ENCODE measurements at regions of chr19 and their contacts with region 1.

Region 1: DNA sequence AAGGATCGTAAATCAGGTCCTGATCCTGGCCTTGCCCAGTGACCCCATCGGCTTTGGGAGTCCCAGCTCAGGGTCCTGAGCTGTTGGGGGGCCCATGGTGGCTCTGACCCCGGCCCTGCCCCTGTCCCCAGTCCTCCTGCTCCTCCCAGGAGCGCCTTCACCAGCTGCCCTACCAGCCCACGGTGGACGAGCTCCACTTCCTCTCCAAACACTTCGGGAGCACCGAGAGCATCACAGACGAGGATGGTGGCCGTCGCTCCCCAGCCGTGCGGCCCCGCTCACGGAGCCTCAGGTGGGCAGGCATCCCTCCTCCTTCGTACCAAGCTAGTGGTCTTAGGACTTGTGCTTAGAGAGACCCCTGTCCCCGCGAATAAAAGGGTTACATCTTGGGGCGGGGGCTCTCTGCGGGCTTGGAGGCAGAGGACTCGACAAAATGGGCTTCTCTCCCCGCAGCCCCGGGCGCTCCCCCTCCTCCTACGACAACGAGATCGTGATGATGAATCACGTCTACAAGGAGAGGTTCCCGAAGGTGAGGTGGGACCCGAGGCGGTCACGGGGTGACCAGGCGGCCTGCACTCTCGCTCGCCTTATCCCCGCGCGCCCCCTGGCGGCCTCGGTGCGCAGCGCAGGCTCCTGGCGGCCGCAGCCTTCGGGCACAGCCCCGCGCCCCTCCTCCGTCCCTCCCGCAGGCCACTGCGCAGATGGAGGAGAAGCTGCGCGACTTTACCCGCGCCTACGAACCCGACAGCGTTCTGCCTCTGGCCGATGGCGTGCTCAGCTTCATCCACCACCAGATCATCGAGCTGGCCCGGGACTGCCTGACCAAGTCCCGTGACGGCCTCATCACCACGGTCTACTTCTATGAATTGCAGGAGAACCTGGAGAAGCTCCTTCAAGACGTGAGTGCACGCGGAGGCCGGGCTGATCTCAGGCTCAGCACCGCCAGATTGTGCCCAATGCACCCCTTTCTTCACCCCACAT is 9.1 kb downstream of the MAST1 start:
- DNase-seq: peak; percentile 76
- ATAC-seq: peak; percentile 97 to 99
- H3K4me3 ChIP-seq: no peak overlapping the region
- H3K27ac ChIP-seq: peak overlapping the region; percentile 20 to 70; a peak in 2 of 6 replicates
- H3K4me1 ChIP-seq: 0 out of 3 replicates have a peak, but pooled peaks cover 3% of the 10 kb centered on the region
- CTCF ChIP-seq: peak; percentile 80
- EP300 ChIP-seq: no peak
- POLR2A ChIP-seq: no peak
- RAD21 ChIP-seq: peak; percentile 75 to 85

Region 2: GRCh38 chr19:12757544-12758274 is 89.7 kb before region 1 on chr19:
- CTCF ChIA-PET with region 1: interaction called, 79 read pairs
- POLR2A ChIA-PET with region 1: no interaction called
- DNase-seq: peak; percentile 50 to 79
- ATAC-seq: peak; percentile 89 to 94
- H3K4me3 ChIP-seq: peak overlapping the region; percentile 36
- H3K27ac ChIP-seq: peak overlapping the region; percentile 60 to 83
- H3K4me1 ChIP-seq: 0 out of 3 replicates have a peak, but pooled peaks cover 3% of the 10 kb centered on the region
- CTCF ChIP-seq: peak; percentile 79
- EP300 ChIP-seq: no peak
- POLR2A ChIP-seq: no peak
- RAD21 ChIP-seq: peak; percentile 28 to 40; a peak in 4 of 5 replicates

Region 3: DNA sequence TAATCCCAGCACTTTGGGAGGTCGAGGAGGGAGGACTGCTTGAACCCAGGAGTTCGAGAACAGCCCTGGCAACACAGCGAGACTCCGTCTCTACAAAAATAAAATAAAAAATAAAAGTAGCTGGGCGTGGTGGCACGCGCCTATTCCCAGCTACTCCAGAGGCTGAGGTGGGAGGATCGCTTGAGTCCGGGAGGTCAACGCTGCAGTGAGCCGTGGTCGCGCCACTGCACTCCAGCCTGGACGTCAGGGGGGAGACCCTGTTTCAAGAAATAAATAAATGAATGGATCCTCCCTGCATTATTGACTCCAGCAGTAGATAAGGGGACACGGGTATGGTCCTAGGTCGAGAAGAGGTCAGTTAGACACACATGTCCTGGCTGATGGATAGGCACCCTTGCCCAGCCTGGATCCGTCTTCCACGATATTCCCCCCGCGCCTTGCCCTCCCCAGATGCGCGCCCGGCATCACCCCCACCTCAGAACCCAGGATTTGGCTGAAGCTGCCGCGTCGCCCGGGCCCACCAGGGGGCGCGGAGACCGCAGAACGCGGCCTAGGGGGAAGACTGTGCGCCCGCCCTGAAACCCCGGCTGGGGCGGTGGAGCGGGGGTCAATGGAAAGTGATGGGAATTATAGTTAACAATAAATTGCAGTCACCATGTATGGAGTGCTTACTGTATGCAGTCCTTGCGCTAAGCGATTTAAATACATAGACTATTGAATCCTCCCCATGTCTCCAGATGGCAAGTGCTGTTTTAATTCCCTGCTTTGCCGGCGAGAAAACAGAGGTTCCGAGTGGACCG is 70.0 kb before region 1 on chr19:
- CTCF ChIA-PET with region 1: interaction called, 16 read pairs
- POLR2A ChIA-PET with region 1: no interaction called
- DNase-seq: peak in 1 of 2 experiments; percentile 77
- ATAC-seq: peak; percentile 56 to 75
- H3K4me3 ChIP-seq: peak overlapping the region; percentile 55
- H3K27ac ChIP-seq: peak overlapping the region; percentile 91 to 99
- H3K4me1 ChIP-seq: peaks cover 40% of the 10 kb centered on the region
- CTCF ChIP-seq: peak; percentile 77
- EP300 ChIP-seq: no peak
- POLR2A ChIP-seq: no peak
- RAD21 ChIP-seq: peak; percentile 75 to 80

Region 4: GRCh38 chr19:12796146-12797071 is 51.0 kb before region 1 on chr19:
- CTCF ChIA-PET with region 1: interaction called, 44 read pairs
- POLR2A ChIA-PET with region 1: no interaction called
- DNase-seq: peak in 1 of 2 experiments; percentile 86
- ATAC-seq: peak; percentile 27 to 34; a peak in 4 of 6 replicates
- H3K4me3 ChIP-seq: no peak overlapping the region
- H3K27ac ChIP-seq: peak overlapping the region; percentile 69 to 84
- H3K4me1 ChIP-seq: peaks cover 21% of the 10 kb centered on the region
- CTCF ChIP-seq: peak; percentile 90
- EP300 ChIP-seq: no peak
- POLR2A ChIP-seq: no peak
- RAD21 ChIP-seq: peak; percentile 95 to 98

Region 5: DNA sequence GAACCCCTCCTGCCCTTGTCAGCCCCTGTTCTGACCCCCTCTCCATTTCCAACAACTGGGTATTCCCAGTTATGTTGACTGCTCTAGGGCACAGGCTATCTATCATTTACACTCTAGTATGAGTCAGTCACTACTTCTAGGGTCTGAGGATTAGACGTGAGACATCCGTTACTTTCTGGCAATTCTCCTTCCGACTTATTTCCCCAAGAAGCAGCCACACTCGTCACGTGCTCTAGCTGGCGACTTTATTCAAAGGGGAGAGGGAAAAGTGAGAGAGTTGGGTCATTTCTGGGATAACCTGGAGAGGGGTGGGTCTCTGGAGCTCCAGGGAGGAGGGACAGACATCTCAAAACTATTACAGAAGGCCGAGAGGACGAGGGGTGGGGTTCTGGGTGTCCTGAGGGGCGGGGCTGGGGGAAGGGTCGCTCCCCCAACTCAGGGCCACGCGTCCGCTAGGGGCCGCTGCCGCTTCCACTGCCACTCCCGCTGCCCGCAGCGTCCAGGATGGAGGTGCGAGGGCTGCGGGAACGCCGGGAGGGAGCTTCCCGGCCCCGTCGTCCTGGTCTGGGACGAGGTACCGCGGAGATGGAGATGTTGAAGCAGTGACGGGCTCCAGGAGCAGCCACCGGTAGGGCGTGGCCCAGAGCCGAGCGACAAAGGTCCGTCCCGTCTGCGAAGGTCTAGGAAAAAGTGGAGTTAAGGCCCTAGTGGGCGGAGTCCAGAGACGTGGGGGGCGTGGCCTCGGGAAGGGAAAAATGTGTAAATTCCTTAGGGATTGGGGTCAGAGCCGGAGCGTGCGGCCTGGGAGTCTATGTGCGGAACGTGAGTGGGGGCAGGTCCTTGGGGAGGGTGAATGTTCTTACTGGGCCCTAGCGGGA is 22.0 kb before region 1 on chr19:
- CTCF ChIA-PET with region 1: interaction called, 36 read pairs
- POLR2A ChIA-PET with region 1: no interaction called
- DNase-seq: peak in 1 of 2 experiments; percentile 57
- ATAC-seq: peak; percentile 72 to 86
- H3K4me3 ChIP-seq: peak overlapping the region; percentile 27; the same call in 2 of the 3 replicates
- H3K27ac ChIP-seq: no peak overlapping the region
- H3K4me1 ChIP-seq: no peaks in the 10 kb centered on the region
- CTCF ChIP-seq: peak; percentile 38
- EP300 ChIP-seq: no peak
- POLR2A ChIP-seq: no peak
- RAD21 ChIP-seq: no peak

Region 6: GRCh38 chr19:12864721-12865715 is 17.6 kb after region 1 on chr19:
- CTCF ChIA-PET with region 1: interaction called, 23 read pairs
- POLR2A ChIA-PET with region 1: no interaction called
- DNase-seq: no peak
- ATAC-seq: peak in 1 of 2 experiments; percentile 34; a peak in 2 of 6 replicates
- H3K4me3 ChIP-seq: no peak overlapping the region
- H3K27ac ChIP-seq: no peak overlapping the region
- H3K4me1 ChIP-seq: no peaks in the 10 kb centered on the region
- CTCF ChIP-seq: no peak
- EP300 ChIP-seq: no peak
- POLR2A ChIP-seq: no peak
- RAD21 ChIP-seq: no peak